Caki2 (cell line): ENCODE measurements at regions of chr16 and their contacts with region 1.

Region 1: DNA sequence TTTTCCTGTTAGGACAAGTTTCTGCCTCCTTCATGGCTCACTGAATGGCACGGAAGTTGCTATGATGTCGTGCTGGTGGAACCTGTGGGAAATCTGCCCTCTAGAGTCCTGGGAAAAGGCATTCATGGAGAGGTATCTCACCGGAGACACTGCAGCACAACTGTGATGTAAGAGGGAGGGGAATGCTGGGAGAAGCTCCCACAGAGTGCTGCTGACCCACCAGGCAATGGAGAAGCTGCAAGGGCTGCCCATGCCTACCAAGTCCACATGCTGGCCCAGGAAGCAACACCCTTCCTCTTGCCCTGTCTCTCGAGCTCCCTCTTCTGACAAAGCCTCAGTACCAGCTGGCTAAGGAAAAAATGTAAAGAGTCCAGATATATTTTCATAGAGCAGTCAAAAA is 45.2 kb upstream of the SLC5A11 start:
- DNase-seq: peak; percentile 76

Region 2: DNA sequence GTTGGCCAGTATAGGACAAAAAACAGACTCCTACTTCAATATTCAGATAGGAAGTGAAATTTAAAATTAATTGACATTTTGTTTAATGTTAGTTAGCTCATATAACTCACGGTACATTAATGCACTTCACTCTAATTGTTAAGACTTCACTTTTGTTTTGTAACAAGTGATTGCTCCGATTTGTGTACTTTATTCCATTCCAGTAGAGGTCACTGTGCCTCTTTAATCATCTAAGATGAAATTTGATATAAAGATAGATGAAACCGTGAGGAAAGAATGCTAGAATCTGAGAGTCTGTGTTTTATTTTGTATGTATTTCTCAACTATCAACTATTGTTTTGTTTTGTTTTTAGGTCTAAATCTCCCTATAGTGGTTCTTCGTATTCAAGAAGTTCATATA is 232.2 kb before region 1 on chr16:
- in situ Hi-C with region 1: loop called (anchors 10 kb)
- DNase-seq: peak; percentile 14